A549 (cell line): ENCODE measurements at regions of chrX and their contacts with region 1.

Region 1: GRCh38 chrX:15143050-15143824 is 126.6 kb downstream of the ASB9 start:
- DNase-seq: peak; percentile 9 to 50
- ATAC-seq: peak; percentile 87 to 94
- H3K4me3 ChIP-seq: no peak overlapping the region
- H3K27ac ChIP-seq: no peak overlapping the region
- H3K4me1 ChIP-seq: no peaks in the 10 kb centered on the region
- CTCF ChIP-seq: peak; percentile 66
- EP300 ChIP-seq: no peak
- POLR2A ChIP-seq: no peak
- RAD21 ChIP-seq: peak; percentile 65 to 67

Region 2: DNA sequence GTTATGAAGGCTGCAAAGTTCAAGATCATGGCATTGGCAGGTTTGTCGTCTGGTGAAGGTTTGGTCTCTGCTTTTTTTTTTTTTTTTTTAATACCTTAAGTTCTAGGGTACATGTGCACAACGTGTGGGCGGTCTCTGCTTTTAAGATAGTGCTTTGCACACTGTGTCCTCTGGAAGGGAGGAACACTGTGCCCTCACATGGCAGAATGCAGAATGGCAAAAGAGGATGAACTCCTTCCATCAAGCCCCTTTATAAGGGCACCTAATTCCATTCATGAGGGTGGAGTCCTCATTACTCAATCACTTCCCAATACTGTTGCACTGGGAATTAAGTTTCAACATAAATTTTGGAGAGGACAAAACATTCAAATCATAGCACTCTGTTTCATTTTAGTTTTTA is 512.5 kb before region 1 on chrX:
- CTCF ChIA-PET with region 1: no interaction called
- POLR2A ChIA-PET with region 1: no interaction called
- DNase-seq: peak in 1 of 2 experiments; percentile 7
- ATAC-seq: peak; percentile 40 to 50; a peak in 1 of 6 replicates
- H3K4me3 ChIP-seq: no peak overlapping the region
- H3K27ac ChIP-seq: no peak overlapping the region
- H3K4me1 ChIP-seq: no peaks in the 10 kb centered on the region
- CTCF ChIP-seq: no peak
- EP300 ChIP-seq: no peak
- POLR2A ChIP-seq: no peak
- RAD21 ChIP-seq: peak in 1 of 2 experiments; percentile 8; a peak in 1 of 5 replicates

Region 3: GRCh38 chrX:15128861-15129260 is 14.4 kb before region 1 on chrX:
- CTCF ChIA-PET with region 1: interaction called, 21 read pairs
- POLR2A ChIA-PET with region 1: no interaction called
- DNase-seq: no peak
- ATAC-seq: no peak
- H3K4me3 ChIP-seq: no peak overlapping the region
- H3K27ac ChIP-seq: no peak overlapping the region
- H3K4me1 ChIP-seq: no peaks in the 10 kb centered on the region
- CTCF ChIP-seq: no peak
- EP300 ChIP-seq: no peak
- POLR2A ChIP-seq: no peak
- RAD21 ChIP-seq: no peak

Region 4: GRCh38 chrX:15335135-15336022 is 192.1 kb after region 1 on chrX and contains the start of gene PIGA:
- CTCF ChIA-PET with region 1: no interaction called
- POLR2A ChIA-PET with region 1: no interaction called
- DNase-seq: peak; percentile 92 to 97
- ATAC-seq: peak; percentile 98 to 99
- H3K4me3 ChIP-seq: peak within 1 kb of the TSS; percentile 67
- H3K27ac ChIP-seq: peak within 1 kb of the TSS; percentile 73 to 92
- H3K4me1 ChIP-seq: no peaks in the 10 kb centered on the region; the same call in 2 of the 3 replicates
- CTCF ChIP-seq: no peak
- EP300 ChIP-seq: no peak
- POLR2A ChIP-seq: peak; percentile 54
- RAD21 ChIP-seq: no peak
- polyA plus RNA-seq, gene PIGA: 19.7 and 21.2 TPM in 2 replicates

Region 5: DNA sequence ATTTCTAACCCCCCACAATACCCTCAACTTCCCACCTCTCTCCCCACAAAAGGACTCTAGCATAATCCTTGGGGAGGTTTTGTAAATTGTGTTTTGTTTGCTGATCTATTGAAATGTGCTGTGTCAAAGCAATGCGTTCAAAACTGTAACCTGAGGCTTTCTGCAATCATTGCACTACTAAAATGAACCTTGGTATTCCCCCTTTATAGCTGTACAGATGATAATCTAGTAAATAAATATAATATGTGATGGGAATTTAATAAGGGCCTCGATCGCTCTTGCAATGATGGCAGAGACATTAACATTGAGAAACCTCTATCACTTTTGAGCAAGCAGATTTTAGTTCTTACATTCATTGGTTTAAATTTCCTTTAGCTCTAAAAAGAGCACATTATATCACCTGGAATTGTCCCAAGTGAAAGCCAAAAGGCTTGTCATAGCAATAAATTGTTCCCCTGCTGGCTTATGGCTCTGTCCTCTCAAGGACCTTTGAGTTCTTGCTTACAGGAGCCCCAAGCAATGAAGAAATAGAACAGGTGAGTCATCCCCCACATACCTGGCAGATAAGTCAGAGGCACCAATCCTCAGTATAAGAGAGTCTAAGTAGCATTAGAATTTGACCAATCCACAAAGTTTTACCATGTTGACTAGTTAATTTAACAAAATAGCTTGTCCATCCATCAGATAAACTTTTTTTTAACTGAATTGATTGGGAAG is 476.0 kb after region 1 on chrX:
- CTCF ChIA-PET with region 1: no interaction called
- POLR2A ChIA-PET with region 1: no interaction called
- DNase-seq: peak; percentile 1 to 36
- ATAC-seq: peak; percentile 43 to 73; a peak in 2 of 6 replicates
- H3K4me3 ChIP-seq: no peak overlapping the region
- H3K27ac ChIP-seq: no peak overlapping the region
- H3K4me1 ChIP-seq: peaks cover 10% of the 10 kb centered on the region; the same call in 2 of the 3 replicates
- CTCF ChIP-seq: no peak
- EP300 ChIP-seq: no peak
- POLR2A ChIP-seq: no peak
- RAD21 ChIP-seq: no peak